ENCODE measurements at regions of chr12 and their contacts with region 1.

Region 1: DNA sequence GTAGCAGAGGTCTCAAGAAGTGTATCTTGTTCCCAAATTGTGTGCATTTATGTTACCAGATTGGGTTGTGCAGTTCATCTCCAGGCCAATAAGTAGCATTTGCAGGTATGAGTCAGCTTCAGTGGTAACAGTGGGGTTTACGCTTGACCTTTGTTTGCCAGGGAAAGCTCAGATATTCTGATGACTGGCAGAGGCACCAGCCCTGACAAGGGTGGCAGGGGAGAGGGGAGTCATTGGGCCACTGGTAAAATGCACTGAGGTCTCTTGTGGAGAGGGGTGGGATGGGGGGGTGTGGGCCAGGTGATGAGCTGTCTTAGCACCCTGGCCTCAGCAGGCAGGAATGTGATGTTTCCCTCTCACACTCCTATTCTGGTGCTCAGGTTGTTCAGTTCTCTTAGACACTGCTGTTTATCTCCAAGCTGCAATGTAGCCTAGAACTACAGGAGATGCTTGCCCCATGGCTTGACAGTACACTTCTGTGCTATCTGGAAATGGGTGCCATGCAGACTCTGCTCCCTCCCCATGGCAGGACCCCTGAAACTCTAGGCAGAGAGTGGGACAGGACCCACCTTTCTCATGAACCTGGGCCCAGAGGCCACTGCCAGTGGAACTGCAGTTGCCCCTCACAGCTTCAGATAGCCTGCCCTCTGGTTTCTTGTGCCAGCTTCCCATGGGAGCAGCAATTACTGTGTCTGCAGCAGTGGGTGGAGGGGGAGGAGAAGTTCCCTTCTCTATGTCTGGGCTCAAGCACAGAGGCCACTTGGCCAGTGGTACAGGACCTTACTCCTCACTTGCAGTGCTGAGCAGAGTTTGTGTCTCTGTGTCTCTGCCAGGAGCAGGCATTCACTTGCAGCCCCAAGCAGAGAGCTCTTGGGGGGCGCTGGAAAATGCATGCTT is 31.9 kb downstream of the USP15 start:
- DNase-seq: no peak
- ATAC-seq: no peak
- H3K4me3 ChIP-seq: no peak overlapping the region
- H3K4me3 Mint-ChIP-seq: no peak overlapping the region
- H3K27ac ChIP-seq: no peak overlapping the region
- H3K27ac Mint-ChIP-seq: peak overlapping the region; percentile 72
- H3K4me1 ChIP-seq: peaks cover 20% of the 10 kb centered on the region
- H3K4me1 Mint-ChIP-seq: peaks cover 72% of the 10 kb centered on the region
- H3K27me3 ChIP-seq: no peaks in the 10 kb centered on the region
- H3K27me3 Mint-ChIP-seq: no peaks in the 10 kb centered on the region
- CTCF ChIP-seq: no peak

Region 2: DNA sequence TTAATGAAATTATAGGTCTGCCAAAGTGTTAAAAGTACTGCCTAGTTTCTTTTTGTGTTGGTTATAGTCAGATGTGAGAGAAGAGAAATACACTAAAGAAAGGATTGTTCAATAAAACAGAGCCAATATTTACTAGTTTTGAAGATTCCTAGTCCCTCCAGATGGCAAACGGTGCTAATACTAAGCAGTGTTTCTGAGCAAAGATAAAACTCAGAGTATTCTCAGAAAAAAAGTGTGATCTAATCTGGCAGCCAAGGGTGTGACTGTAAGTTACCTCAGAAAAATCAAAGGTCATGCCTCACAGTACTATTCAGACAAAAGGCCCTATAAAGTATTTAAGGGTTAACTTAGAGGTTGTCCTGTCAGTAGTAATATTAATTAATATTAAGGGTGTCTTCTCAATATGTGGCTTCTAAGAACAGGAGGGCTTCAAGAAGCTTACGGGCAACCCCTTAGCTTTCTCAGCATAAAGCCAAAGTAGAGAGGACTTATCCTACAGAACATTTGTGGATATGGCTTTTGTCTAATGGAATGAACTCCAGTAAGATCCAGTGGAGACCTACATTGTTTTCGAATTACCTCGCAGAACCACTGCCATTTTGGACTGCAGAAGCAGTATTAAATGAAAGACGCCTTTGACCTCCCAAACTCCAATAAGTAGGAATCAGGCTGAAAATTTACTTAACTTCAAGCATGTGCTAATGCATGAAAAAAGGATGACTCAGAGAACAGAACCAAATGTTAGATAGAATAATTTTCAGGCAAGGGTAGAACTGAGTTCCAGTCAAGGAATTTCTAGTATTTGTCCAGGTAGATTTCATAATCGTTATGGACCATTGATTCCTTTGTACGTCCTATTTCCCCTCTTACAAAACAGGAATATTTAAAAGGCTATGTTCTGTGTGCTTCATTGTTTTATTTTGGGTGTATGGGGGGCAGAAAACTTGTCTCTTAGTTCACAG is 14.7 kb after region 1 on chr12:
- CTCF ChIA-PET with region 1: no interaction called
- POLR2A ChIA-PET with region 1: interaction called, 3 read pairs
- intact Hi-C with region 1: loop called in 1 of 2 experiments (anchors 1 kb)
- DNase-seq: no peak
- ATAC-seq: no peak
- H3K4me3 ChIP-seq: no peak overlapping the region
- H3K4me3 Mint-ChIP-seq: no peak overlapping the region
- H3K27ac ChIP-seq: no peak overlapping the region
- H3K27ac Mint-ChIP-seq: peak overlapping the region; percentile 14
- H3K4me1 ChIP-seq: peaks cover 9% of the 10 kb centered on the region
- H3K4me1 Mint-ChIP-seq: peaks cover 66% of the 10 kb centered on the region
- H3K27me3 ChIP-seq: no peaks in the 10 kb centered on the region
- H3K27me3 Mint-ChIP-seq: no peaks in the 10 kb centered on the region
- CTCF ChIP-seq: no peak

Measured in CD8-positive, alpha-beta T cell (primary cell).